Heart right ventricle (tissue), 16 donors: ENCODE measurements at regions of chr1 and their contacts with region 1.

Region 1: DNA sequence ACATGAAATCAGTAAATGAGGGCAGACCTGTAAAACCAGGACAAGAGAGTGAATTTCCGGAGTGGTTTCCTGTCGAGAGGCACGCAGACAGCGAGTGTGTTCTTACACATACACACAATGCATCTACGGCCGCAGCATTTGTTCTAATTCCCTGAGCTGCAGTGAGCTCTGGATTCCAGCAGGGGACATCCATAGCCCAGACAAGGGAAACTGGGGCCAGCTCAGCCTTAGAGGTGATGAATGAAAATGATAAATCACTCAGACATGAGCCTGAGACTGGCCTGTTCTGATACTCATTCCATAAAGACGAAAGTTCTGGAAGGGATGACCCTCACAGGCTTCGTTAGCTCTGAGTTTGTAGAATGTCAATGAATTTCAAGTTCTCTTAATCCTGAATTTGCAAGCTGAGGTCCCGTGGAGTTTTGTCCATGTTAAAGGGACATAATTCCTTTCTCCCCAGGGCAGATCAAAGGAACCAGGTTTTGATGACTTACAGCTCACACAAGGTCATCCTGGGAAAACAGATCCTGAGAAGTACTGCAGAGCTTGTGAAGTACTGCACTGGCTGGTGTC is 207.9 kb upstream of the C1orf87 start:
- DNase-seq: peak; percentile 22 to 56
- ATAC-seq: peak; percentile 85 to 96 (median 90)
- H3K4me3 ChIP-seq: no peak overlapping the region
- H3K27ac ChIP-seq: no peak overlapping the region
- H3K4me1 ChIP-seq: peaks cover 0 to 19% (median 15%) of the 10 kb centered on the region in 9 donors
- H3K27me3 ChIP-seq: no peaks in the 10 kb centered on the region
- CTCF ChIP-seq: peak; percentile 83 to 95 (median 89)

Region 2: DNA sequence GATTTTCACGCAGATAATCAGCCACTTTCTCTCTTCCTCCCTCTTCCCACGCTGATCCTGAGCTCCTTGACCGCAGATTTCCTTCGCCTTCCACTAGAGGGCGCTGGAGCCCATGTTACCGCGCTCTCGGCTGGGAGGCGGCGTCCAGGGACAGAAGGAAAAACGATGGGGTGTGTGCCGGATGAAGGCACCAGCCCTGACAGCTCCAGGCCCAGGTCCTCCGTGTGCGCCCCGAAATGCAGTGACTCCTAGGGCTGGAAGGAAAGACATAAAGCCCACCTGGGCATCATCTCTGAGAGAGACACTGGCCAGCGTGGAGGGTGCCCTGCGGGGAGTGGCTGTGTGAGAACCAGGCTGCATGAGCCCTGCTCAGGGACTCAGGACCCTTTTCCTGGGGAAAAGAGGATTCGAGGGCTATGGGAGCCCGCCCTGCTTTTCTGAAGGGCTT is 310.0 kb before region 1 on chr1:
- intact Hi-C with region 1: loop called in 2 of 10 experiments (anchors 10 kb)
- DNase-seq: peak; percentile 63 to 68
- ATAC-seq: peak; percentile 78 to 93 (median 86)
- H3K4me3 ChIP-seq: no peak overlapping the region
- H3K27ac ChIP-seq: no peak overlapping the region
- H3K4me1 ChIP-seq: peaks cover 0 to 7% (median under 1%) of the 10 kb centered on the region in 9 donors
- H3K27me3 ChIP-seq: peaks cover 0 to 6% (median 0%) of the 10 kb centered on the region in 7 donors
- CTCF ChIP-seq: peak; percentile 82 to 93 (median 90)

Region 3: GRCh38 chr1:60765204-60765603 is 483.8 kb after region 1 on chr1:
- intact Hi-C with region 1: loop called in 8 of 10 experiments (anchors 1 to 10 kb)
- DNase-seq: no peak
- ATAC-seq: peak in 6 of 8 donors; percentile 31 to 64 (median 50)
- H3K4me3 ChIP-seq: no peak overlapping the region
- H3K27ac ChIP-seq: no peak overlapping the region
- H3K4me1 ChIP-seq: peaks cover 7 to 33% (median 16%) of the 10 kb centered on the region in 9 donors
- H3K27me3 ChIP-seq: no peaks in the 10 kb centered on the region
- CTCF ChIP-seq: peak in 8 of 9 donors; percentile 49 to 75 (median 64)

Region 4: DNA sequence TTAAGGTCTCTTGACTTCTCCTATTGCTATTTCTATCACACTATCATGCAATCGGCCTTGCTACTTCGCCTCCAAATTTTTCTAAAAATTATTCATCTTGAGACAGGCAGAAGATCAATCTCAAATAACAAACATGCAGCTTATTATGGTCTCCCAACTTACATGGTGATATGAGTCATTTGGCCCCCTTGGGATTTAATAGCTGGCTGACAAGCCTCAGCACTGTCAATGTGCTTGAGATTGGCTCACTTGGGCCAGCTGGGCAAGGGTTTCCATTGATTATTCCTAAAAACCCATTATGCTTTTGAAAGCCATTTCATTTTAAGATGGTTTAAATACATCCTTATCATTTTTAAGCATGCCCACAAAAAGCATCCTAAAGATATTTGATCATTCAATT is 576.4 kb after region 1 on chr1:
- intact Hi-C with region 1: loop called in 1 of 10 experiments (anchors 10 kb)
- DNase-seq: no peak
- ATAC-seq: no peak
- H3K4me3 ChIP-seq: no peak overlapping the region
- H3K27ac ChIP-seq: no peak overlapping the region
- H3K4me1 ChIP-seq: peaks cover 0 to 9% (median 0%) of the 10 kb centered on the region in 9 donors
- H3K27me3 ChIP-seq: no peaks in the 10 kb centered on the region
- CTCF ChIP-seq: no peak

Region 5: GRCh38 chr1:60950224-60951063 is 669.0 kb after region 1 on chr1:
- intact Hi-C with region 1: loop called in 1 of 10 experiments (anchors 10 kb)
- DNase-seq: peak in 1 of 2 donors; percentile 12
- ATAC-seq: peak in 1 of 8 donors; percentile 20
- H3K4me3 ChIP-seq: no peak overlapping the region
- H3K27ac ChIP-seq: no peak overlapping the region
- H3K4me1 ChIP-seq: peaks cover 0 to 30% (median 11%) of the 10 kb centered on the region in 9 donors
- H3K27me3 ChIP-seq: no peaks in the 10 kb centered on the region
- CTCF ChIP-seq: no peak

Region 6: GRCh38 chr1:61842871-61843514 is 1561.5 kb after region 1 on chr1:
- intact Hi-C with region 1: loop called in 1 of 10 experiments (anchors 10 kb)
- DNase-seq: no peak
- ATAC-seq: no peak
- H3K4me3 ChIP-seq: no peak overlapping the region
- H3K27ac ChIP-seq: no peak overlapping the region
- H3K4me1 ChIP-seq: peaks cover 0 to 17% (median 7%) of the 10 kb centered on the region in 9 donors
- H3K27me3 ChIP-seq: no peaks in the 10 kb centered on the region
- CTCF ChIP-seq: peak in 7 of 9 donors; percentile 12 to 37 (median 28)